Naive thymus-derived CD4-positive, alpha-beta T cell (primary cell): ENCODE measurements at regions of chr12 and their contacts with region 1.

Region 1: DNA sequence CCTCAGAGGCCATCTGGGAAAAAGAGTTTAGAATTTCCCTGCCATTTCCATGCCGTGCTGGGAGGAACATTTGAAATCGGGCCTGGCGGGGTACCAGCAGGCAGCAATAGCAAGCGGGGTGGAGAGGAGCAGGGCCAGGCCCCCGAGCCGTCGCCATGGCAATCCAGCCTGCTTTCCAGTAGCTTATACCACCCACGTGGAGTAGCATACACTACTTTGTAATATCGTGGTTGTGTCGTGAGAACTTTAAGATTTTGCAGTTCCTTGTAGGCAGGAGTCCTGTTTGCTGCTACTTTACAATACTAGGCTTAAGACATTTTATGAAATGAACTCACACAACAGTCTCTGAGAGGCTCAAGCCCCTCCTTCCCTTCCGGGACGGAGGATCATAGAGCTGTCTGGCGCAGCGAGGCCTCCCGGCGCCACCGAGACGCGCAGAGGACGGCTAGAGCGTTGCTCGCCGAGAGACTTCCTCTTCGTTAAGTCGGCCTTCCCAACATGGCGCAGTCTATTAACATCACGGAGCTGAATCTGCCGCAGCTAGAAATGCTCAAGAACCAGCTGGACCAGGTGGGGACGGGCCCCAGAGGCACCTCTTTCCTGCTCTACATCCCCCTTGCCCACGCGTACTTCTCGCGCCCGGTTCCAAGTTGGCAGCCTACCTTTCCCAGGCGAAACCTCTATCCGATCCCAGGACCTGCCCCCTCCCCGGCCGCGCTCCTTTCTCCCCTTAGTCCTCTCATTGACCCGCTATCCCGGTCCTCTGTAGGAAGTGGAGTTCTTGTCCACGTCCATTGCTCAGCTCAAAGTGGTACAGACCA is at the start of gene PFDN5:
- DNase-seq: peak; percentile 71 to 94 (median 88)
- ATAC-seq: peak; percentile 95
- H3K4me3 ChIP-seq: peak within 1 kb of the TSS; percentile 85
- H3K4me3 Mint-ChIP-seq: peak within 1 kb of the TSS; percentile 91 to 100 (median 98)
- H3K27ac ChIP-seq: peak within 1 kb of the TSS; percentile 94
- H3K27ac Mint-ChIP-seq: peak within 1 kb of the TSS; percentile 96 to 99 (median 98)
- H3K4me1 ChIP-seq: peaks cover 24 to 28% of the 10 kb centered on the region in 2 donors
- H3K4me1 Mint-ChIP-seq: peaks cover 27 to 62% (median 37%) of the 10 kb centered on the region in 7 donors
- H3K27me3 ChIP-seq: no peaks in the 10 kb centered on the region
- H3K27me3 Mint-ChIP-seq: no peaks in the 10 kb centered on the region
- total RNA-seq, gene PFDN5: 323 to 785 (median 692) TPM

Region 2: GRCh38 chr12:52351196-52352059 is 943.9 kb before region 1 on chr12:
- CTCF ChIA-PET with region 1: no interaction called
- POLR2A ChIA-PET with region 1: no interaction called
- intact Hi-C with region 1: no loop called
- DNase-seq: peak in 8 of 9 donors; percentile 31 to 87 (median 74)
- ATAC-seq: peak; percentile 97
- H3K4me3 ChIP-seq: no peak overlapping the region
- H3K4me3 Mint-ChIP-seq: peak overlapping the region in 8 of 10 donors; percentile 11 to 62 (median 46)
- H3K27ac ChIP-seq: no peak overlapping the region
- H3K27ac Mint-ChIP-seq: peak overlapping the region in 7 of 9 donors; percentile 2 to 78 (median 27)
- H3K4me1 ChIP-seq: peaks cover 13 to 19% of the 10 kb centered on the region in 2 donors
- H3K4me1 Mint-ChIP-seq: peaks cover 3 to 28% (median 26%) of the 10 kb centered on the region in 7 donors
- H3K27me3 ChIP-seq: no peaks in the 10 kb centered on the region
- H3K27me3 Mint-ChIP-seq: peaks cover 0 to 22% (median 4%) of the 10 kb centered on the region in 5 donors

Region 3: DNA sequence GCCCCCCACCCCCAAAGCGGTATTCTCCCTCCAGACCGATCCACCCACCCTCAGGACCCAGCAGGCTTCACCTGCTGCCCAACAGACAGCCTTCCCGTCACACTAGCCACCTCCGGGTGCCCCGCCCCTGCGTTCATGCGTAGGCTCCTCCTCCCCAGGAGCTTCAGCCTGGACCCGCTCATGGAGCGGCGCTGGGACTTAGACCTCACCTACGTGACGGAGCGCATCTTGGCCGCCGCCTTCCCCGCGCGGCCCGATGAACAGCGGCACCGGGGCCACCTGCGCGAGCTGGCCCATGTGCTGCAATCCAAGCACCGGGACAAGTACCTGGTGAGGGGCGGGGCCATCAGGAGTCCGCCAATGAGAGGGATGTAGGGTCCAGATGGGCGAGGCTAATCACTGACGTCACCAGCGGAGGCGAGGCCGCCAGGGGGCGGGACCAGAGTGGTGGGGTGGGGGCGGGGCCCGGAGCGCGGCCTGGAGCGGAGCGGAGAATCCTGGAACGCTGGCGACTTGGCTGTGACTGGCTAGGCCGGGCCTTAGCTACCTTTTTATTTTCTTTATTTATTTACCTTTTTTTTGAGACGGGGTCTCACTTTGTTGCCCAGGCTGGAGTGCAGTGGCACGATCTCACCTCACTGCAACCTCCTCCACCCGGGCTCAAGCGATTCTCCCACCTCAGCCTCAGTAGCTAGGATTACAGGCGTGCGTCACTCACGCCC is 241.0 kb before region 1 on chr12:
- CTCF ChIA-PET with region 1: no interaction called
- POLR2A ChIA-PET with region 1: interaction called, 3 read pairs
- intact Hi-C with region 1: loop called in 1 of 2 experiments (anchors 5 kb)
- DNase-seq: peak; percentile 85 to 94 (median 93)
- ATAC-seq: peak; percentile 98
- H3K4me3 ChIP-seq: peak overlapping the region; percentile 95
- H3K4me3 Mint-ChIP-seq: peak overlapping the region; percentile 89 to 97 (median 94)
- H3K27ac ChIP-seq: peak overlapping the region; percentile 71
- H3K27ac Mint-ChIP-seq: peak overlapping the region; percentile 83 to 96 (median 92)
- H3K4me1 ChIP-seq: peaks cover 6 to 9% of the 10 kb centered on the region in 2 donors
- H3K4me1 Mint-ChIP-seq: peaks cover 8 to 14% (median 11%) of the 10 kb centered on the region in 7 donors
- H3K27me3 ChIP-seq: no peaks in the 10 kb centered on the region
- H3K27me3 Mint-ChIP-seq: no peaks in the 10 kb centered on the region

Region 4: DNA sequence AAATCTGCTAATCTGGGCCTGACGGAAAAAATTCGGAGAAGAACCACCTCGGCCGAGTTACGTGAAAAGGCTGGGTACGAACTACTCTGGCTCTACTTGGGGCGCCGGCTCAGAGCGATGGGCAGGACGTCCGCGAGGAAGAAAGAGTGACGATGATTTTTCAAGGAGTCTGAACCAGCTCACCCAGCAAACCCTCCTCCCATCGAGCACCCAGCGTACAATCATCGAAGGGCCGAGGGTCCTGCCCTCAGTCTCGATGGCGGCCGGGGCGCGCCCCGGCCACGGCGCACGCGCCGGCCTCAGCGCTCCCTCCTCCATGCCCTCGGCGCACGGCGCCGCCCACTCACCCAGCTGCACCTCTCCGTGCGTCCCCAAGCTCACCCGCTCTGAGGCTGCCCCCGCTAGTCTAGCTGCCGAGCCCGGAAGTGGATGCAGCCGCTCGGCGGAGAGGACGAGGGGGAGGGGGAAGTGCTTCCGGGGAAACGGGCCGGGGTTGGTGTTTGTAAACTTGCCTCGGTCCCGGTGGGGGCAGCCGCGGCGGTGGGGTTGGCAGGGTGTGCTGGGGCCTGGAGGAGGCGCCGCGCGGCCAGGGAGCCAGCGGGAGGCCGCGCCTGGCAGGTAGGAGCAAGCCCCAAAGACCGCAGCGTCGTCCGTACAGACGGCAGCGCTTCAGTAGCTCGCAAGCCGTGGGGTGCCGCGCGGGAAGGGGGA is 114.9 kb before region 1 on chr12 and contains the starts of genes CSAD and ZNF740:
- CTCF ChIA-PET with region 1: interaction called, 5 read pairs
- POLR2A ChIA-PET with region 1: interaction called, 21 read pairs
- intact Hi-C with region 1: loop called (anchors 1 kb)
- DNase-seq: peak; percentile 86 to 98 (median 97)
- ATAC-seq: peak; percentile 98
- H3K4me3 ChIP-seq: peak within 1 kb of the TSS; percentile 89
- H3K4me3 Mint-ChIP-seq: peak within 1 kb of the TSS; percentile 84 to 98 (median 92)
- H3K27ac ChIP-seq: peak within 1 kb of the TSS; percentile 92
- H3K27ac Mint-ChIP-seq: peak within 1 kb of the TSS; percentile 93 to 98 (median 97)
- H3K4me1 ChIP-seq: peaks cover 30 to 46% of the 10 kb centered on the region in 2 donors
- H3K4me1 Mint-ChIP-seq: peaks cover 44 to 57% (median 52%) of the 10 kb centered on the region in 7 donors
- H3K27me3 ChIP-seq: no peaks in the 10 kb centered on the region
- H3K27me3 Mint-ChIP-seq: no peaks in the 10 kb centered on the region
- total RNA-seq, gene CSAD: 34.1 to 76.3 (median 69.1) TPM
- total RNA-seq, gene ZNF740: 37.2 to 135 (median 49.5) TPM

Region 5: DNA sequence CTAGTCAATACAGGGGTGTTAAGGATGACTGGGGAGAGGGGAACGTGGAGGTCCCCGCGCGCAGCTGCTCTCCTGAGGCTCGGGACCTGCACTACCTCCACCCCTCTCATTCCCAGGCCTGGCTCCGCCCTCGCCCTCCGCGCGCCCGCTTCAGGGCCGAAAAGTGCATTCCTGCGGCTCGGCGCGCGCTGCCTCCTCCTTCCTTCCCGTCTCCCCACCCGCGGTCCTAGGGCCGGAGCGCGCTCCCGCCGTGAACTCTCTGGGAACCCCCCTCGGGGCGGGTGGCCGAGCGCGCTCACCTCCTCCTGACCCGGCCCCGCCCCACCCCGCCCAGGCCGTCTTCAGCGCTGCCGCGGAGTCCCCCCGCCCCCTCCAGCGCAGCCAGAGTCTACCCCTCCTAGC is 74.5 kb before region 1 on chr12:
- CTCF ChIA-PET with region 1: interaction called, 159 read pairs
- POLR2A ChIA-PET with region 1: interaction called, 23 read pairs
- intact Hi-C with region 1: loop called (anchors 1 kb)
- DNase-seq: peak in 8 of 9 donors; percentile 51 to 85 (median 55)
- ATAC-seq: peak; percentile 79
- H3K4me3 ChIP-seq: peak overlapping the region; percentile 95
- H3K4me3 Mint-ChIP-seq: peak overlapping the region; percentile 94 to 100 (median 98)
- H3K27ac ChIP-seq: peak overlapping the region; percentile 78
- H3K27ac Mint-ChIP-seq: peak overlapping the region; percentile 84 to 98 (median 94)
- H3K4me1 ChIP-seq: peaks cover 55 to 63% of the 10 kb centered on the region in 2 donors
- H3K4me1 Mint-ChIP-seq: peaks cover 50 to 80% (median 77%) of the 10 kb centered on the region in 7 donors
- H3K27me3 ChIP-seq: no peaks in the 10 kb centered on the region
- H3K27me3 Mint-ChIP-seq: no peaks in the 10 kb centered on the region

Region 6: DNA sequence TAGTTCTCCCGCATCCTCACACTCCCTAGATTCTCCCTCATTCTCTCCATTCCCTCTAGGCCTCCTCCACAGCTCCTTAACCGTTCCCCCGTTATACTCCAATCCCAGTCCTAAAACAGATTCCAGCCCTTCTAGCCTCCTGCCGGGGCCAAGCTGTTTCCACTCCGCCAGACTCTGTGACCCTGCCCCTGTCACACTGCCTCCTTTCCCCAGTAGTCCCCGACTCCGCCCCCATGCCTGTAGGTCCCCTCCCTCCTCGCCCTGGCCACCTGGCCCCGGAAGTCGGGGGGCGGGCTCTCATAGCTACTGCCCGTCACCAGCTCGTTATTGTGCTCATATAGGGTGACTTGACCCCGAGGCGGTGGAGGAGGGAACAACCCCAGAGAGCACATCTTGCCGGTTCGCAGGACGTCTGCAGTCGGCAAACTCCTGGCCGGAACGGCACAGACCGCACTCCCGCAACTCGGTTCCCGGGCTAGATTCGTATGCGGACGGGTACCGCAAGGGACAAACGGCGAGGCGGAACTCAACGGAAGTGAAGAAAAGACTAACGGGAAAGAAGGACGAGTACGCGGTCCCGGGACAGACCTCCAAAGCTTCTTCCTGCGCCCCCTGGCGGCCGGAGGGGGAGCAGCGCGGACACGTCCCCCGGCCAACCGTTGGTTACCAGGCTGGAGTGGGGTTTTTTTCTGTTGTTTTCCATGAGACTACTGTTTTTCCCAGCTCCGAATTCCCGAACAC is 26.0 kb after region 1 on chr12 and contains the start of gene AAAS:
- CTCF ChIA-PET with region 1: interaction called, 18 read pairs
- POLR2A ChIA-PET with region 1: interaction called, 81 read pairs
- intact Hi-C with region 1: loop called (anchors 1 kb)
- DNase-seq: peak; percentile 89 to 95 (median 94)
- ATAC-seq: peak; percentile 89
- H3K4me3 ChIP-seq: peak within 1 kb of the TSS; percentile 98
- H3K4me3 Mint-ChIP-seq: peak within 1 kb of the TSS; percentile 94 to 99 (median 96)
- H3K27ac ChIP-seq: peak within 1 kb of the TSS; percentile 73
- H3K27ac Mint-ChIP-seq: peak within 1 kb of the TSS; percentile 94 to 98 (median 94)
- H3K4me1 ChIP-seq: peaks cover 25 to 37% of the 10 kb centered on the region in 2 donors
- H3K4me1 Mint-ChIP-seq: peaks cover 23 to 47% (median 43%) of the 10 kb centered on the region in 7 donors
- H3K27me3 ChIP-seq: no peaks in the 10 kb centered on the region
- H3K27me3 Mint-ChIP-seq: peaks cover 0 to 3% (median 0%) of the 10 kb centered on the region in 5 donors
- total RNA-seq, gene AAAS: 35.4 to 73.5 (median 69.0) TPM

Region 7: DNA sequence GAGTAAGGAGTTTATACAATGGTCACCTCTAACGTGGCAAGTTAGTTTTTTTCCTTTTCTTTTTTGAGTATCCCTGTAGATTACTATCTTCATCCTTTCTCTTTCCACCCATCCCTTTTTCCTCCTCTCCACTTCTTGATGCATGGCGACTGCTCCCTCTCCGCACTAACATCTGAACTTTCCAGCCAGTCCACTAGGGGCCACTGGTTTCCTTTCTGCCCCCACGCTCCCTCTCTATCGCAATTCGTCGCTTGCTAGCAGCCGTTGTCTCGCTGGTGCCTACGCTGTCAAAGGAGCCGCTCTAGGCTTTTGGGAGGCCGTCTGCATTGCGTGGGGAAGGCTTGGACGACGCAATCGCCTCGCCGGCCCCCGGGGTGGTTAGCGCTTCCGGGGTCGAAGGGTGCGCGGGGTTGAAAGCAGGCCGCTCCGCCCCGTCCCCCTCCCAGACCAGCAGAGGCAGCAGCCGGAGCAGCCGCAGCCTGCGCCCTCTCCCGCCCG is 156.4 kb after region 1 on chr12 and contains the start of gene PCBP2:
- CTCF ChIA-PET with region 1: no interaction called
- POLR2A ChIA-PET with region 1: interaction called, 3 read pairs
- intact Hi-C with region 1: loop called (anchors 1 kb)
- DNase-seq: peak; percentile 88 to 98 (median 97)
- ATAC-seq: peak; percentile 94
- H3K4me3 ChIP-seq: peak within 1 kb of the TSS; percentile 69
- H3K4me3 Mint-ChIP-seq: peak within 1 kb of the TSS; percentile 51 to 99 (median 98)
- H3K27ac ChIP-seq: peak within 1 kb of the TSS; percentile 96
- H3K27ac Mint-ChIP-seq: peak within 1 kb of the TSS; percentile 85 to 100 (median 99)
- H3K4me1 ChIP-seq: peaks cover 20 to 26% of the 10 kb centered on the region in 2 donors
- H3K4me1 Mint-ChIP-seq: peaks cover 23 to 42% (median 37%) of the 10 kb centered on the region in 7 donors
- H3K27me3 ChIP-seq: no peaks in the 10 kb centered on the region
- H3K27me3 Mint-ChIP-seq: no peaks in the 10 kb centered on the region
- total RNA-seq, gene PCBP2: 737 to 1,110 (median 928) TPM

Region 8: DNA sequence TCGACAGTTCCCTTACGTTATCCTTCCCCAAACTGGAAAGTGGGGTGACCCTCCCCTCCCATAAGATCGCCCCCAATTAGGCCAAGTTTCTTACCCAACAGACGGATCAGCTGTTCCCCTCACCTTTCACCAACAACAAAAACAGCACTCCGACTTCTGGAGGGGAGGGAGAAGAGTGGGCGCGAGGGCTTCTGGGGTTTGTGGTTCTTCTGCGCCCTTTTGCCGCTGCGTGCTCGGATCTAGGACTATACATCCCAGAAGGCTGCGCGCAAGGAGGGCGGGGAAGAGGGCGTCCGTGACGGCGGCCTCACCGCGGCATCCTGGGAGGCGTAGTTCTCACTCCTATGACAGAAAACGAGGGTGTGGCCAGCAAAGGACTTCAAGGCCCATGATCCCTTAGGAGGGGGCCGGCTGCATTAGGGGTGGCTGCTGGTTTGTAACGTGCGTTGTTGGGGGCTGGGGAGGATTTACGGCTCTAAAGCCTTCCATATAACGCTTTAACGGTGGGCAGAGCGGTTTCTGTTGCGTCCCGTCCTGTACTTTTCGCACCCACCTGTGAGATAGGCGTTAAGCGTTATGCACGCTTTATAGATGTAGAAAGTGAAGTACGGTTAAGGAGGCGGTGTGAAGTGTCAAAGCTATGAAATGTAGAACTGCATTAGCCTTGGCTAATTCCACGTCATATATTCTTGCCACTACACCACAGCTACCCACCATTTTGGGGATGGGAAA is 432.2 kb after region 1 on chr12 and contains the start of gene CALCOCO1:
- CTCF ChIA-PET with region 1: no interaction called
- POLR2A ChIA-PET with region 1: no interaction called
- intact Hi-C with region 1: no loop called
- DNase-seq: peak; percentile 84 to 98 (median 95)
- ATAC-seq: peak; percentile 98
- H3K4me3 ChIP-seq: peak within 1 kb of the TSS; percentile 94
- H3K4me3 Mint-ChIP-seq: peak within 1 kb of the TSS; percentile 91 to 100 (median 94)
- H3K27ac ChIP-seq: peak within 1 kb of the TSS; percentile 73
- H3K27ac Mint-ChIP-seq: peak within 1 kb of the TSS; percentile 69 to 98 (median 91)
- H3K4me1 ChIP-seq: peaks cover 13 to 17% of the 10 kb centered on the region in 2 donors
- H3K4me1 Mint-ChIP-seq: peaks cover 10 to 41% (median 32%) of the 10 kb centered on the region in 7 donors
- H3K27me3 ChIP-seq: no peaks in the 10 kb centered on the region
- H3K27me3 Mint-ChIP-seq: peaks cover 0 to 13% (median 0%) of the 10 kb centered on the region in 5 donors
- total RNA-seq, gene CALCOCO1: 66.1 to 175 (median 137) TPM